Activated CD8-positive, alpha-beta T cell treated with anti-CD3 and anti-CD28 coated beads for 36 hours (primary cell): ENCODE measurements at regions of chr2 and their contacts with region 1.

Region 1: DNA sequence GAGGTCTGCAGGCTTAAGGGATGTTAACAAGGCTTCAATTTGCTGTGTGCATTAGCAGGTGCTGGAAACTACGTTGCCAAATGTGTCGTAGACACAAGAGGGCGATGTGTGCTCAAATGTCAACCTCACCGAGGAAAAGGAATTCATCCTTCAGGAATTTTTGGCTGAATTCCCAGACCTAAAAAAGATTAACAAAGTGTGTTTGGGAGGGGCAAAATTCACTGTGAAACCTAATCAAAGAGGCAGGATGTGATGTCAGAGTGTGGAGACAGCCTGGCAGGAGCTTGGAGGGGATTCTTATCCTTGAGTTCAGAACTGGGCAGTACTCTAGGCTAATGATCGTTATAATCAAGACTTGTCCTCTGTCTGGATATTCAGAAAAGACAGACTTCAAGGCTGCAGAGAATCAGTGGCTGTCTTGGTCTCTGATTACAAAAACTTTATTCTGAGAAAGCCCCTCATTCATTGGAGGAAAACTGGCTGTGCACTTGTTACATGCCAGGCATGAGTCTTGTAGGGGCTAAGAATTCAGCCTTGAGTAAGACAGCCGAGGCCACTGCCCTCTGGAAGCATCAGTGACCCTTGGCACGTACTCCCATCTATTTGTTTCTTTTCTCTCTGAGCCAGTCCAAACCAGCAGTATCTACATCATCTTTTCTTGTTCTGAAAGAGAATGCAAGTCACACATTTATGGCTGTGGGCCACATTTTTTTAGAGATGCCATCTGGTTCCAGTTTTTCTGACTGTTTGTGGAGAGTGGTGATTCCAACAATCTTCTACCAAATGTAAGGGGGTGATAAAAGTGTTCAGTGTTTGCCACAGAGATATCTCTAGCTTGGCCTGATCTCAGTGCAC is 18.7 kb upstream of the SCYGR1 start:
- DNase-seq: peak; percentile 37
- ATAC-seq: no peak
- H3K4me3 Mint-ChIP-seq: no peak overlapping the region
- H3K27ac Mint-ChIP-seq: no peak overlapping the region
- H3K4me1 Mint-ChIP-seq: peaks cover 50% of the 10 kb centered on the region
- H3K27me3 Mint-ChIP-seq: no peaks in the 10 kb centered on the region
- CTCF ChIP-seq: peak; percentile 70

Region 2: GRCh38 chr2:227428731-227429285 is 22.4 kb after region 1 on chr2:
- CTCF ChIA-PET with region 1: no interaction called
- POLR2A ChIA-PET with region 1: no interaction called
- intact Hi-C with region 1: no loop called
- DNase-seq: no peak
- ATAC-seq: no peak
- H3K4me3 Mint-ChIP-seq: no peak overlapping the region
- H3K27ac Mint-ChIP-seq: no peak overlapping the region
- H3K4me1 Mint-ChIP-seq: peaks cover 6% of the 10 kb centered on the region
- H3K27me3 Mint-ChIP-seq: no peaks in the 10 kb centered on the region
- CTCF ChIP-seq: no peak

Region 3: DNA sequence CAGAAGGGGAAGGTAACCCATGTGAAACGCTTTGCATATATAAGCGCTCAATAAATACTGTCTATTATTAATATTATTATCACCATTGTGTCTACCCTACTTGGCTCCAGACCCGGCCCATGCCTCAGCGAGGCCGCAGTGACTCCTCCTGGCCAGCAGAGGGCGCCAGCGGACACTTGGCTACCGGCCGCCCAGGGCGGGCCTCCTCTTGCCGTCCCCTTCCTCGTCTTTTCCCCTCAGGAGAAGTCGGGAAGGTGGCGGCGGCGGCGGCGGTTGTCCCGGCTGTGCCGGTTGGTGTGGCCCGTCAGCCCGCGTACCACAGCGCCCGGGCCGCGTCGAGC is 65.5 kb after region 1 on chr2 and contains the start of gene AGFG1:
- CTCF ChIA-PET with region 1: interaction called, 28 read pairs
- POLR2A ChIA-PET with region 1: interaction called, 4 read pairs
- intact Hi-C with region 1: no loop called
- DNase-seq: peak; percentile 87
- ATAC-seq: peak; percentile 87
- H3K4me3 Mint-ChIP-seq: peak within 1 kb of the TSS; percentile 90
- H3K27ac Mint-ChIP-seq: peak within 1 kb of the TSS; percentile 85
- H3K4me1 Mint-ChIP-seq: peaks cover 54% of the 10 kb centered on the region
- H3K27me3 Mint-ChIP-seq: no peaks in the 10 kb centered on the region
- CTCF ChIP-seq: peak; percentile 97
- total RNA-seq, gene AGFG1: 117 to 119 TPM

Region 4: DNA sequence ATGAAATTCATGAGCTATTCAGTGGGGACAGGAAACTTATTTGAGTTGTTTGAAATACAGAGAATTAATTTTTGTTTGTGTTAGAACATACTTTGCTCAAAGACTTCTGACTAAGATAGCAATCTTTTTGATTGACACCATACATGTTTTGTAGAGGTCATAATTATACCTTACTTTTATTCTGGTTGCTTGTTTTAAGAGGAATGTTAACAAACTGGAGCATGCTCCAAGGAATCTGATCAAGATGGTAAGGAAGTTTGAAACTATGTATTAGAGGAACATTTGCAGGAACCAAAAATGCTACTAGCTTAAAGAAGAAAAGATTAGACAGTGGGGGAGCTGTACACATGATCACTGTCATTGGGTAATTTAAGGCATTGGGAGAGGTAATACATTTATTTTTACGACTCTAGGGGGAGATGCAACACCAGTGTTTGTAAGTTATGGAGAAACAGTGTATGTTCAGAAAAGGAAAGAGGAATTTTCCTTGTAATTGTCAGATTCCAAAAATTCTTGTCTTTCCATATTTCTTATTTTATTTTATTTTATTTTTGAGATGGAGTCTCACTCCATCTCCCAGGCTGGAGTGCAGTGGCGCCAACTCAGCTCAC is 73.6 kb after region 1 on chr2:
- CTCF ChIA-PET with region 1: interaction called, 28 read pairs
- POLR2A ChIA-PET with region 1: no interaction called
- intact Hi-C with region 1: no loop called
- DNase-seq: no peak
- ATAC-seq: peak; percentile 43
- H3K4me3 Mint-ChIP-seq: peak overlapping the region; percentile 28
- H3K27ac Mint-ChIP-seq: peak overlapping the region; percentile 78
- H3K4me1 Mint-ChIP-seq: peaks cover 75% of the 10 kb centered on the region
- H3K27me3 Mint-ChIP-seq: no peaks in the 10 kb centered on the region
- CTCF ChIP-seq: peak; percentile 65

Region 5: GRCh38 chr2:227578651-227579050 is 172.2 kb after region 1 on chr2:
- CTCF ChIA-PET with region 1: interaction called, 3 read pairs
- POLR2A ChIA-PET with region 1: interaction called, 3 read pairs
- intact Hi-C with region 1: loop called (anchors 10 kb)
- DNase-seq: no peak
- ATAC-seq: no peak
- H3K4me3 Mint-ChIP-seq: no peak overlapping the region
- H3K27ac Mint-ChIP-seq: no peak overlapping the region
- H3K4me1 Mint-ChIP-seq: no peaks in the 10 kb centered on the region
- H3K27me3 Mint-ChIP-seq: peaks cover 26% of the 10 kb centered on the region
- CTCF ChIP-seq: no peak

Region 6: GRCh38 chr2:227643990-227644551 is 237.7 kb after region 1 on chr2:
- CTCF ChIA-PET with region 1: no interaction called
- POLR2A ChIA-PET with region 1: no interaction called
- intact Hi-C with region 1: loop called (anchors 10 kb)
- DNase-seq: peak; percentile 4
- ATAC-seq: no peak
- H3K4me3 Mint-ChIP-seq: no peak overlapping the region
- H3K27ac Mint-ChIP-seq: no peak overlapping the region
- H3K4me1 Mint-ChIP-seq: no peaks in the 10 kb centered on the region
- H3K27me3 Mint-ChIP-seq: no peaks in the 10 kb centered on the region
- CTCF ChIP-seq: no peak